Posterior vena cava (tissue), 2 donors: ENCODE measurements at regions of chr19 and their contacts with region 1.

Region 1: DNA sequence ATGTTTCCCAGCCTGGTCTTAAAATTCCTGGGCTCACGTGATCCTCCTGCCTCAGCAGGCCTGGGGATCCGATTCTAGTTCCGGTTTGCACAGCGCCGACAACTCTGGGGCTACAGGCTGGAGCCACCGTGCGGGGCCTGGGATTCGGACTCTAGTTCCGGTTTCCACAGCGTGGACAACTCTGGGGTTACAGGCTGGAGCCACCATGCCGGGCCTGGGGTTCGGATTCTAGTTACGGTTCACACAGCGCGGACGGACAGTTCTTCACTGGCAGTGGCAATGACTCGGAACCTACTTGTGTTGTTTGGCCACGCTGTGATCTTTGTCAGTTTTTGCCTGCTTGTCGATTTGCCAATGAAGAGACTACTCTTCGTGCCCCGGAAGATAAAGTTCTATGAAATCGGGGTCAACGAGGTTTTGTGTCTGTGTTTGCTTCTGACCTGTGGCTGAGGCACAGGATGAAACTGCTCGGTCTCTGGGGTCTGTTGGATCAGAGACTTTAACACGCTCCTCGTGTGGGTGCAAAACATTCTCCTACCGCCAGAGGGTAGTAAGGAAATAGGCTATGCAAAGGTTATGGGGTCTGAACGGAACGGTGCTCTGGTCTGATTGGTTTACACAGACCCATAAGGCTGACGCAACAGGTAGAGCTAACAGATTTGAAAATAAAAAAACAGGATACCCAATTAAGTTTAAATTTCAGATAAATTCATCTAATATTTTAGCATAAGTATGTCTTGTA is 12.1 kb upstream of the ZSCAN1 start:
- DNase-seq: peak; percentile 38

Region 2: GRCh38 chr19:57421037-57421436 is 600.7 kb before region 1 on chr19:
- intact Hi-C with region 1: no loop called
- DNase-seq: no peak

Region 3: DNA sequence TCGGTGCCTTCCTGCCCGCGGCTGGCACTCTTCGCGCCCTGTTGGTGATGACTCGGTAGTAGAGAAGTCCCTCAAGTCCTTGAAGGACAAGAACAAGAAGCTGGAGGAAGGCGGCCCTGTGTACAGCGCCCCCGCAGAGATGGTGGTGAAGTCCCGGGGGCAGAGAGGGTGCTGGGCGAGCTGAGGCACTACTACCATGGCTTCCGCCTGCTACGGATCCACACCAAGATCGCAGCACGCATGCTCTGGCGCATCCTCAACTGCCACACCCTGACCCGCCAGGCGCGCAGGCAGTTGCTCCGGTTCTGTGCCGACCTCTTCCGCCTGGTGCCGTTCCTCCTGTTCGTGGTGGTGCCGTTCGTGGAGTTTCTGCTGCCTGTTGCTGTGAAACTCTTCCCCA is 23.2 kb after region 1 on chr19:
- intact Hi-C with region 1: loop called in 1 of 2 experiments (anchors 1 kb)
- DNase-seq: no peak

Region 4: DNA sequence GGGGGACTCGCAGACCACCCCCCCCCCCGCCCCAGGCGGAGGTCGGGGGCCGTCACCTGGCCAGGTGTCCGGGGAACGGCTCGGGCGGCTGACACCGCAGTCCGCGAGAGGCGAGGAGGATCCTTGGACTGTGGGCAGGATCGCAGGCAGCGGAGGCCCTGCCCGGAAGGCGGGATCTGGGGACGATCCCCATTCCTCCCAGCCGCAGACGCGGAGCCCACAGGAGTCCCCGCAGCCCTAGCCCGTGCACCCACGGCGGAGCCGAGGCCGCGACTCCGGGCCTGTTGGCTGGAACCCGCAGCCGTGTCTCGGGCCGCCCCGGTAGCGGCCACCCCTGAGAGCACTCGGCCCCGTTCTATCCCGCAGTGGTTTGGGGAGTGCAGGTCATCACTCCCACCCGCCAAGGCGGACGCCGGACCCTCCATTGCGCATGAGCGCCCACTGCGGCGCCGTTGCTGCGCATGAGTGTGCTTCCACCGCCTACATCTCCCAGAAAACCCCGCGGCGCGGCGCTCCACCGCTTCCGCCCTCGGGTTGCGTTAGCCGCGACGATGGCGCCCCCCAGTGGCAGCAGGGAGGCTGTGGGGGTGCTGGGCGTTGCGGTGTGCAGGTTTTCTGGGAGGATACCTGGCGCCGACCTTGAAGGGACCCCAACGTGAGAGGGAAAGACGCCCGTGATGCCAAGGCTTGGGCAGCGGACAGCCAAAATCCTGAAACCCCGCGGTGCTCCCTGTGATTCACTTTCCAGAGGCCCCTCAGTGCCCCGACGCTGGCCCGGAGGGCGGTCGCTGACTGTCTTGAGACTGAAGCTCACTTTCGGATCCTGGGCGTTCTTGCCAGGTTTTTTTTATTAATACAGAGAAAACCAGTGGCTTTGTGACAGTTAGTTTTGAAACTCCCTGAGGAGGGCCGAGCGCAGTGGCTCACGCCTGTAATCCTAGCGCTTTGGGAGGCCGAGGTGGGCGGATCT is 133.3 kb after region 1 on chr19:
- intact Hi-C with region 1: loop called in 1 of 2 experiments (anchors 5 kb)
- DNase-seq: peak; percentile 99